ENCODE measurements at regions of chr2 and their contacts with region 1.

Region 1: DNA sequence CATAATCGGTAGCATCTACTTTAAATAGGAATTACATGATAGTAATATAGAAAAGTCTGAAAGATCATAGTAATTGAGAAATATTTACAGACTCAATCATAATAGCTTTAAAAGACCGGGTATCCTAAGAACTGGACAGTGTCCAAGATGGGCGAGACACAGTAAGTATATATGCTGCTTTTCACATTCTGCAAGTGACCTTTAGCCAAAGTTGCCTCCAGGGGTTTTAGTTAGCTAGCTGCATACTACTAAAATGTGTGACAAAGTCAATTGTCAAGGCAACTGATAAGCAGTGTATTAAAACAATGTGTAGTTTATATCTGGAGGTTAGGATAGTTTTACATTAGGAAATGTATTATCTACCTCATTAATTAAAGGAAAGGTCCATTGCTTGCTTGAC is 24.6 kb downstream of the CD302 start:
- DNase-seq: no peak
- H3K4me3 ChIP-seq: no peak overlapping the region
- H3K27ac ChIP-seq: no peak overlapping the region
- H3K4me1 ChIP-seq: no peaks in the 10 kb centered on the region
- H3K27me3 ChIP-seq: peaks cover 0 to 1% (median 0%) of the 10 kb centered on the region in 4 experiments; a peak in 1 of 7 replicates
- CTCF ChIP-seq: no peak
- EP300 ChIP-seq: no peak
- POLR2A ChIP-seq: no peak
- RAD21 ChIP-seq: no peak

Region 2: GRCh38 chr2:159755788-159756187 is 17.6 kb before region 1 on chr2:
- CTCF ChIA-PET with region 1: interaction called, 6 read pairs
- POLR2A ChIA-PET with region 1: interaction called, 11 read pairs
- DNase-seq: peak in 1 of 2 experiments; percentile 25
- H3K4me3 ChIP-seq: no peak overlapping the region
- H3K27ac ChIP-seq: no peak overlapping the region
- H3K4me1 ChIP-seq: no peaks in the 10 kb centered on the region
- H3K27me3 ChIP-seq: no peaks in the 10 kb centered on the region
- CTCF ChIP-seq: peak in 2 of 3 experiments; percentile 66 to 79; a peak in 3 of 4 replicates
- EP300 ChIP-seq: no peak
- POLR2A ChIP-seq: no peak
- RAD21 ChIP-seq: peak; percentile 62 to 70

Region 3: DNA sequence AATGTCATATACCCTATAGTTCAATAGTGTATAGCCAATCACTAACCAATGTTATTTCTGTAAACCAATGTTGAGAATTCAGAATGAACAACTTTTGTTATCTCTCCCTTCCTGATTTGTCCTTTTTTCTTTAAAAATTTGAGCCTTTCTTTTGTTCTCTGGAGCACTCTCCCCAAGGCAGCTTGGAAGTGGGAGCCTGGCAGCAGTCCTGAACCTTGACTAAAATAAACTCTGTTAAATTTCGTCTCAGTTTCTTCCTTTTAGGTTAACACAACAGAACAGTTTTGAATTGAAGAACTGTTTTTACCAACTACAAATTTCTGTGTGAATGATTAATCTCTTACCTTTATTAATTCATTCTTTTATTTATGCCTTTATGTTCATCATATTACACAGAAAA is 11.4 kb before region 1 on chr2:
- CTCF ChIA-PET with region 1: interaction called, 3 read pairs
- POLR2A ChIA-PET with region 1: interaction called, 11 read pairs
- DNase-seq: no peak
- H3K4me3 ChIP-seq: no peak overlapping the region
- H3K27ac ChIP-seq: no peak overlapping the region
- H3K4me1 ChIP-seq: no peaks in the 10 kb centered on the region
- H3K27me3 ChIP-seq: no peaks in the 10 kb centered on the region
- CTCF ChIP-seq: no peak
- EP300 ChIP-seq: no peak
- POLR2A ChIP-seq: no peak
- RAD21 ChIP-seq: no peak

Region 4: DNA sequence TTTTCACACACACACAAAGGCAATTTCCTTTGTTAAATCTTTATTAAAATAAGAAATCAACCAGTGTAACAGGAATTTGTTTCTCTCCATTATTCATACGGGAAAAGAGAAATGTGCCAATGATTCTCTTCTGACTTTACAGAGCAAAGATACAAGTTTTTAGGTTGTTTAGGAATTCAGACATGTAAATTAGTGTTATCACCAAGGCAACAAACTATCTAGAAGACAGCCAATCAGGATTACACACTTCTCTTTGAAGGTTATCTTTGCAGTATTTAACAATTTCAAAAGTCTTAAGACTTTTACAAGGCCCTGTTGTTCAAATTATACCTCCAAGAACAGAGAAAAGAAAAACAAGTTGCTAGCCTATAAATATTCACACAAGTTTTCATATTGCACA is 10.1 kb after region 1 on chr2:
- CTCF ChIA-PET with region 1: interaction called, 3 read pairs
- POLR2A ChIA-PET with region 1: interaction called, 10 read pairs
- DNase-seq: no peak
- H3K4me3 ChIP-seq: no peak overlapping the region
- H3K27ac ChIP-seq: no peak overlapping the region
- H3K4me1 ChIP-seq: peaks cover 0 to 6% (median 3%) of the 10 kb centered on the region in 4 experiments; a peak in 1 of 7 replicates
- H3K27me3 ChIP-seq: no peaks in the 10 kb centered on the region
- CTCF ChIP-seq: no peak
- EP300 ChIP-seq: no peak
- POLR2A ChIP-seq: no peak
- RAD21 ChIP-seq: no peak

Region 5: DNA sequence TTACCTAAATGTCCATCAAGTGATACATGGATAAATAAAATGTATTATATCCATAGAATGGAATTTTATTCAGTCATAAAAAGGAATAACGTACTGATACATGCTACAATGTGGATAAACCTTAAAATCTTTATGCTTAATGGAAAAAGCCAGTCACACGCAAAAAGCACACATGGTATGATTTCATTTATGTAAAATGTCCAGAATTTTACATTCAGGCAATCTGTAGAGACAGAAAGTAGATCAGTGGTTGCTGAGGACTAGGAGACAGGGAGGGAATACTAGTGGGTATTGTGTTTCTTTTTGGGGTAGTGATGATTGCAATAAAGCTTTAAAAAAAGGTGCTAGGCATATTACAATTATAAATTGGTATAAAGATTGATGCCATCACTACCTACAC is 55.3 kb after region 1 on chr2:
- CTCF ChIA-PET with region 1: no interaction called
- POLR2A ChIA-PET with region 1: no interaction called
- DNase-seq: no peak
- H3K4me3 ChIP-seq: no peak overlapping the region
- H3K27ac ChIP-seq: no peak overlapping the region
- H3K4me1 ChIP-seq: no peaks in the 10 kb centered on the region
- H3K27me3 ChIP-seq: peaks cover 9 to 41% (median 28%) of the 10 kb centered on the region in 4 experiments
- CTCF ChIP-seq: no peak
- EP300 ChIP-seq: no peak
- POLR2A ChIP-seq: no peak
- RAD21 ChIP-seq: no peak

Region 6: GRCh38 chr2:159840616-159841015 is 67.2 kb after region 1 on chr2:
- CTCF ChIA-PET with region 1: no interaction called
- POLR2A ChIA-PET with region 1: no interaction called
- DNase-seq: no peak
- H3K4me3 ChIP-seq: no peak overlapping the region
- H3K27ac ChIP-seq: no peak overlapping the region
- H3K4me1 ChIP-seq: no peaks in the 10 kb centered on the region
- H3K27me3 ChIP-seq: peaks cover 0 to 12% (median 6%) of the 10 kb centered on the region in 4 experiments; a peak in 4 of 7 replicates
- CTCF ChIP-seq: no peak
- EP300 ChIP-seq: no peak
- POLR2A ChIP-seq: no peak
- RAD21 ChIP-seq: no peak

Region 7: GRCh38 chr2:160087854-160088745 is 314.7 kb after region 1 on chr2:
- CTCF ChIA-PET with region 1: no interaction called
- POLR2A ChIA-PET with region 1: no interaction called
- DNase-seq: peak in 1 of 2 experiments; percentile 60
- H3K4me3 ChIP-seq: no peak overlapping the region
- H3K27ac ChIP-seq: no peak overlapping the region
- H3K4me1 ChIP-seq: no peaks in the 10 kb centered on the region
- H3K27me3 ChIP-seq: no peaks in the 10 kb centered on the region; a peak in 1 of 7 replicates
- CTCF ChIP-seq: peak in 1 of 3 experiments; percentile 10; a peak in 1 of 4 replicates
- EP300 ChIP-seq: no peak
- POLR2A ChIP-seq: no peak
- RAD21 ChIP-seq: peak; percentile 41 to 53